Activated CD4-positive, alpha-beta memory T cell treated with anti-CD3 and anti-CD28 coated beads for 36 hours (primary cell): ENCODE measurements at regions of chr14 and their contacts with region 1.

Region 1: GRCh38 chr14:103104654-103105452 is 10.3 kb downstream of the EXOC3L4 start:
- DNase-seq: peak; percentile 74
- H3K4me3 Mint-ChIP-seq: no peak overlapping the region
- H3K27ac Mint-ChIP-seq: no peak overlapping the region
- H3K4me1 Mint-ChIP-seq: peaks cover 7% of the 10 kb centered on the region
- H3K27me3 Mint-ChIP-seq: peaks cover 28% of the 10 kb centered on the region

Region 2: DNA sequence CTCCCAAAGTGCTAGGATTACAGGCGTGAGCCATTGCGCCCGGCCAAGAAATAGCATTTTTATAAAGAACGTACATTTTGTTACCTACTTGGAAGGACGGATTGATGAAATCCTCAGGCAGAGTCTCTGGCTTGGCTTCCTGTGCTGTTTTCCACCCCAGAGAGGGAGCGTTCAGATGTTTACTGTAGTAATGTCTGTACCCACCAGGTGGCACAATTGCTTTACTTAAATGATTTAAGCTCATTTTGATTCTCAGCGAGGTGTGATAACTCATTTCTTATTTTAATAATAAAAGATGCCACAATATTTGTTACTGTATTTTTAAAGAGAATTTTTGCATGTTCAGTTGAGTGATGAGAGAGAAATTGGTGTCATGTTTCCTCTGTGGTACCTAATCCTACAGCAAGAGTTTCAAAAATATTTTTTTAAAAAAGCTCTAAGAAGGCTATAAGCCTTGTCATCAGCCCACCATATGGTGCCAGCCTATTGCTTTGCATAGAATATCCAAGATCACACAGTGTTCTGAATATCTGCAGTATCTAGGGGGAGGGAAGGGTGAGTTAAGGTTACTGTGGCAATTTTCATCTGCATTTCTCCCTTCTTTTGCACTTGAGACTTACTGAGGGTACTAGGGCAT is 410.2 kb before region 1 on chr14:
- CTCF ChIA-PET with region 1: interaction called, 24 read pairs
- POLR2A ChIA-PET with region 1: no interaction called
- intact Hi-C with region 1: no loop called
- DNase-seq: peak; percentile 49
- H3K4me3 Mint-ChIP-seq: no peak overlapping the region
- H3K27ac Mint-ChIP-seq: no peak overlapping the region
- H3K4me1 Mint-ChIP-seq: peaks cover 18% of the 10 kb centered on the region
- H3K27me3 Mint-ChIP-seq: no peaks in the 10 kb centered on the region

Region 3: GRCh38 chr14:103091041-103091882 is 13.6 kb before region 1 on chr14:
- CTCF ChIA-PET with region 1: interaction called, 34 read pairs
- POLR2A ChIA-PET with region 1: no interaction called
- intact Hi-C with region 1: no loop called
- DNase-seq: peak; percentile 81
- H3K4me3 Mint-ChIP-seq: peak overlapping the region; percentile 29
- H3K27ac Mint-ChIP-seq: no peak overlapping the region
- H3K4me1 Mint-ChIP-seq: peaks cover 3% of the 10 kb centered on the region
- H3K27me3 Mint-ChIP-seq: peaks cover 8% of the 10 kb centered on the region

Region 4: DNA sequence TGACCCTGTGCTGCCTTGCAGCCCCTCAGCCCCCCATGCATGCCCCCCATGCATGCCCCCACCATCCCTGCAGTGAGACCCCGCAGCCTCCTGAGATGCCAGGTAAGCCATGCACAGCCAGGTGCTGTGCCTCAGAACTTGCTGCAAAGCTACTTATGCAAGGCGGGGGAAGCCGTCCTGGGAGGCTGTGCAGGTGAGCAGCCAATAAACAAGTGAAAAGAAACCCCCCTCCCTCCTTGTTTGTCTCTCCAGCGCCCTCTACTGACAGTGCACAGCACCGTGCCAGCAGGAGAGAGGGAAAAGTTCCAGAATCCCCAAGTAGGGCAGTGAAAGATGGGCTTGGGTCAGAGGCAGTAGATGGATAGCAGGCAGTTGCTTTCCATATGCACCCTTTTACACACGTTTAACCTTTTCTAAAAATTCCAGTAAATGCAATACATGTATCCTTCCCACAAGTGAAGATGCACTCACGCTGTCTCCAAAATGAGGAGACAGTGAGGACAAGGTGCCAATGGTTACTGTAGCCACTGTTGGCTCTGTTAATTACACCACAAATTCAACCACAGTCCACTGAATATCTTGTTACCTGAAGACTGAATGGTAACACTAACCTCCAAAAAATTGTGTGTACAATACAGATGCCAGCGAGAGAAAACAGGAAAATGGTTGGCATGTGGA is 36.4 kb after region 1 on chr14:
- CTCF ChIA-PET with region 1: interaction called, 24 read pairs
- POLR2A ChIA-PET with region 1: no interaction called
- intact Hi-C with region 1: no loop called
- DNase-seq: peak; percentile 57
- H3K4me3 Mint-ChIP-seq: no peak overlapping the region
- H3K27ac Mint-ChIP-seq: no peak overlapping the region
- H3K4me1 Mint-ChIP-seq: peaks cover 6% of the 10 kb centered on the region
- H3K27me3 Mint-ChIP-seq: peaks cover 34% of the 10 kb centered on the region

Region 5: DNA sequence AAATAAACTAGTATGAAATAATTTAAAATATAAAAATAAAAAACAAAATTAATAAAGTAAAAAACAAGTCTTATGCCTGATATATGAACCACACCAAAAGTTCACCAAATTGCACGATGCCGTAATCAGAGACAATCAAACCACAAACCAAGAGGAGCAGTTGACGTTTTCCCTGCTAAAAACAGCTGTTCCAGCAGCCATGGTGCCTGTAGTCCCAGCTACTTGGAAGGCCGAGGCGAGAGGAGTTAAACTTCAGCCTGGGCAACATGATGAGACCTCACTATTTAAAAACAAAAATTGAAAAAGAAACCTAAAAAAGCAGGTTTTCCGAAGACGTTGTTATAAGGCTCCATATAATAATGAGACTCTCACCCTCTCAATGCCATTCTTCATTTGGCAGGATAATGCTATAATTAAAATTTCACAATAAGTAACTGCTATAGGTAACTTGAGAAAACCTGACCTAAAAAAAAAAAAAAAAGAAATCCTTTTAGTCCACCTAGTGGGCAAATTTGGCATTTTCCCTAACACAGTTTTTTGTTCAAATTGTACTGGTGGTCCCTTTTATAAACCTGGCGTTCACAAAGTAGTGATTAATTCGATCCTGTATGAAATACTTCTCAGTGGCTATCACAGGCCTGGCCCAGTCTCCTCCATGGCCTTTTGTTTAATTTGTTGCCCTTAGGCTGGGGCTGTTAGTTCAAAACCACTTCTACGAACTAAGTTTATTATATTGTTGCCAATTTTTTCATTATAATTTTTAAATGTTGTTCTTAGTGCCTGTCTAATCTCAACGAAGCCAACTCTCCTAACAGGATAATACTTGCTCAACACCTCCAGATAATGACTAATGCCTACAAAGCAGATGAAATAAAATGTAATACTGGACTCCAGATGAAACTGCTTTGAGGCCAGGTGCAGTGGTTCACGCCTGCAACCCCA is 80.5 kb after region 1 on chr14:
- CTCF ChIA-PET with region 1: interaction called, 16 read pairs
- POLR2A ChIA-PET with region 1: no interaction called
- intact Hi-C with region 1: loop called (anchors 5 kb)
- DNase-seq: no peak
- H3K4me3 Mint-ChIP-seq: no peak overlapping the region
- H3K27ac Mint-ChIP-seq: no peak overlapping the region
- H3K4me1 Mint-ChIP-seq: peaks cover 9% of the 10 kb centered on the region
- H3K27me3 Mint-ChIP-seq: peaks cover 47% of the 10 kb centered on the region

Region 6: GRCh38 chr14:103241531-103241930 is 136.7 kb after region 1 on chr14:
- CTCF ChIA-PET with region 1: interaction called, 12 read pairs
- POLR2A ChIA-PET with region 1: no interaction called
- intact Hi-C with region 1: no loop called
- DNase-seq: no peak
- H3K4me3 Mint-ChIP-seq: no peak overlapping the region
- H3K27ac Mint-ChIP-seq: no peak overlapping the region
- H3K4me1 Mint-ChIP-seq: no peaks in the 10 kb centered on the region
- H3K27me3 Mint-ChIP-seq: peaks cover 22% of the 10 kb centered on the region